ENCODE measurements at regions of chr15 and their contacts with region 1.

Region 1: GRCh38 chr15:68252925-68253534 is 23.5 kb upstream of the CLN6 start:
- DNase-seq: peak; percentile 87
- ATAC-seq: peak; percentile 65
- H3K4me3 ChIP-seq: no peak overlapping the region
- H3K27ac ChIP-seq: no peak overlapping the region
- H3K4me1 ChIP-seq: peaks cover 9% of the 10 kb centered on the region; the same call in 1 of the 2 replicates
- H3K27me3 ChIP-seq: no peaks in the 10 kb centered on the region
- CTCF ChIP-seq: peak; percentile 84

Region 2: GRCh38 chr15:68073576-68074288 is 179.3 kb before region 1 on chr15:
- CTCF ChIA-PET with region 1: no interaction called
- POLR2A ChIA-PET with region 1: no interaction called
- intact Hi-C with region 1: no loop called
- DNase-seq: no peak
- ATAC-seq: no peak
- H3K4me3 ChIP-seq: no peak overlapping the region
- H3K27ac ChIP-seq: no peak overlapping the region
- H3K4me1 ChIP-seq: no peaks in the 10 kb centered on the region
- H3K27me3 ChIP-seq: no peaks in the 10 kb centered on the region
- CTCF ChIP-seq: no peak

Region 3: DNA sequence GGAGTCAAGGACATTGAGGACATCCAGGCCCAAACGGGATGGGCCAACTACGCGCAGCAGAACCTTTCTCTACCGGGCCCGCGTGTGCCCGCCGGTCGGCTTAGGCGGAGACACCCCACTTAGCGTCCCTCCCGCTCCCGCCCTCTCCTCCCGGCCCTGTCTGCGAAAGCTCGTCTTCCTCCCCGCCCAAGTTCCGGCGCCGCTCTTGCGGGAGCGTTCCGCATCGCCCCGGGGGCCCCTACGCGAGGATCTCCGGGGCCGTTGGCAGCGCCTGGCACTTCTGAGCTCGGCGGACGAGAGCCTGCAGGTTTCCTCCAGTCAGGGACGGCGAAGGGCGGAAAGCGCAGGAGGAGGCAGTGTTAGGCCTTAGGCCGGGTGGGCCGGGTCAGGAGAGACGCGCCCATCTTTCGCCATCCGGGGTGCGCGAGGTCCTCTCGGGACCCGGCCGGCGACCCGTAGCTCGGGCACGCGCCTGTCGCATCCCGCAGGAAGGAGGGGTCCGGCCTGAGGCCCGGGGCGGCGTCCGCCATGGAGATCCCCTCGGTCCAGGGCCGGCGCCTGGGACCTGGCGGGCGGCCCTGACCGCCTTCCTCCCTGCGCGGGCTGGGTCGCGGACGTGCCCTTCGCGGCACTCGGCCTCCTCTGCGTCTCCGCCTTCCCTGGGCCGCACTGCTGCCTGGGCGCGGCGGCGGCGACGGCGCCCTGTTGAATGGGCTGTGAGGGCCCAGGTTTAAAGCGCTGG is 24.7 kb after region 1 on chr15 and contains the start of gene FEM1B:
- CTCF ChIA-PET with region 1: interaction called, 5 read pairs
- POLR2A ChIA-PET with region 1: no interaction called
- intact Hi-C with region 1: loop called (anchors 2 kb)
- DNase-seq: peak; percentile 83
- ATAC-seq: peak; percentile 69
- H3K4me3 ChIP-seq: peak within 1 kb of the TSS; percentile 89
- H3K27ac ChIP-seq: peak within 1 kb of the TSS; percentile 95
- H3K4me1 ChIP-seq: peaks cover 64% of the 10 kb centered on the region
- H3K27me3 ChIP-seq: no peaks in the 10 kb centered on the region
- CTCF ChIP-seq: no peak
- total RNA-seq, gene FEM1B: 19.4 and 22.1 TPM in 2 replicates

Region 4: DNA sequence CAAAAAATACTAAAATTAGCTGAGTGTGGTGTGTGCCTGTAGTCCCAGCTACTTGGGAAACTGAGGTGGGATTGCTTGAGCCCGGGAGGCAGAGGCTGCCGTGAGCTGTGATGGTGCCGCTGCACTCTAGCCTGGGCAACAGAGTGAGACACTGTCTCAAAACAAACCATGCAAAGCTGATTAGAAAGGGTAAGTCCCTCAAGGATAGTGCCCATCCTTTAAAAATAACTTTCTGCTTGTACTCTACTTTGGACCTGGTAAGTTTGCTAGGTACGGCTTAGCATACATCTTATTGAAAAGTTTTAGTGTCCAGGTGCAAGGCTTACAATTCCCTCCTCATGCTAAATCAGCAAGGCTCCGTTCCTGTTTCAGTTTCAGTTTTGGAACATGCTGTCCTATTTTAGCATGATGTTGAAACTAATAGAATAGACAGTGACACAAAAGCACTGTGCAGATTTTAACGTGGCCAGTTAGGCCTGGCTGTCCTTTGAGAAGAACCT is 45.9 kb after region 1 on chr15:
- CTCF ChIA-PET with region 1: interaction called, 14 read pairs
- POLR2A ChIA-PET with region 1: no interaction called
- intact Hi-C with region 1: no loop called
- DNase-seq: no peak
- ATAC-seq: no peak
- H3K4me3 ChIP-seq: no peak overlapping the region
- H3K27ac ChIP-seq: no peak overlapping the region
- H3K4me1 ChIP-seq: no peaks in the 10 kb centered on the region
- H3K27me3 ChIP-seq: no peaks in the 10 kb centered on the region
- CTCF ChIP-seq: no peak

Region 5: DNA sequence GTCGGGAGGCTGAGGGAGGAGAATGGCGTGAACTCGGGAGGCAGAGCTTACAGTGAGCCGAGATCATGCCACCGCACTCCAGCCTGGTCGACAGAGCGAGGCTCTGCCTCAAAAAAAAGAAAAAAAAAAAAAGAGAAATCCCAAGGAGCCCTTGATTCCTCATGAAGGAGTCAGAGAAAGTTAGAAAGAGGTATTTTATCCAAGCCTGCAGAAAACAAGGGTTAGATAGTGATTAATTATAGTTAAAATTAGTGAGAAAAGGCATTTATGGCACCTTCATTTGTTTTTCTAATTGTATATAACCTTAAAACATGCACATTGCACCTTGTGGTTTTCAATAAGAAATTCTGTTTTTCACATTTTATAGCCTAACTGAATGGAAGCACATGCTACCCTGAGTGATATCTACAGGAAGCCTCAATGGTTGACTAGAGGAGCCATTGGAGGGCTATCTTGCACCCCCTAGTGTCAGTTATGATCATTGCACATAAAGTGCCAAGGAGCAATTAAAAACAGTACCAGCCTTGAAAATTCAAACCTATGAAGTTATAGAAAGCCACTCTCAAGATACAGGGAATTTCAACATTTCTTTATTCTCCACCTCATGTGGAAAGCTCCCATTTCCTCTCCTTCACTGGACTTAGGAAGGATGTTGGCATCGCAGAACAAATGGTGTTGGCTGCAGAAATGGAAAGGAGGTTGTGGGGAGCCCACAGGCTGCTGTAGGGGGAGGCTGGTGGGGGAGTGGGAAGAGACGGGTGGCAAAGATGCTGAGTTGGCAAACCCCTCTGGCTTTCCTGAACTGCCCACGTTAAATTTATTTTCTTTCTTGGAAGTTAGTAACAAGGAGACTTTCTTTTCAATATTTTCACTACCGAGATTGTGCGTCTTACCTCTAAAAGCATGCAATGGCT is 130.4 kb after region 1 on chr15:
- CTCF ChIA-PET with region 1: no interaction called
- POLR2A ChIA-PET with region 1: no interaction called
- intact Hi-C with region 1: loop called (anchors 5 kb)
- DNase-seq: peak; percentile 69
- ATAC-seq: no peak
- H3K4me3 ChIP-seq: no peak overlapping the region
- H3K27ac ChIP-seq: peak overlapping the region; percentile 44; the same call in 1 of the 2 replicates
- H3K4me1 ChIP-seq: peaks cover 18% of the 10 kb centered on the region
- H3K27me3 ChIP-seq: no peaks in the 10 kb centered on the region
- CTCF ChIP-seq: peak; percentile 80

Measured in PC-3 (cell line).